Activated CD4-positive, alpha-beta T cell treated with anti-CD3 and anti-CD28 coated beads, Interleukin-2, amount 10 ng/mL, durations not matched to agents 7 days and 5 days (primary cell): ENCODE measurements at regions of chr19 and their contacts with region 1.

Region 1: GRCh38 chr19:58519355-58520256 is at the start of gene ZBTB45:
- DNase-seq: peak; percentile 91
- H3K4me3 Mint-ChIP-seq: peak within 1 kb of the TSS; percentile 90
- H3K27ac Mint-ChIP-seq: peak within 1 kb of the TSS; percentile 95
- H3K4me1 Mint-ChIP-seq: peaks cover 56% of the 10 kb centered on the region
- H3K27me3 Mint-ChIP-seq: no peaks in the 10 kb centered on the region
- total RNA-seq, gene ZBTB45: 17.9 to 19.9 TPM

Region 2: DNA sequence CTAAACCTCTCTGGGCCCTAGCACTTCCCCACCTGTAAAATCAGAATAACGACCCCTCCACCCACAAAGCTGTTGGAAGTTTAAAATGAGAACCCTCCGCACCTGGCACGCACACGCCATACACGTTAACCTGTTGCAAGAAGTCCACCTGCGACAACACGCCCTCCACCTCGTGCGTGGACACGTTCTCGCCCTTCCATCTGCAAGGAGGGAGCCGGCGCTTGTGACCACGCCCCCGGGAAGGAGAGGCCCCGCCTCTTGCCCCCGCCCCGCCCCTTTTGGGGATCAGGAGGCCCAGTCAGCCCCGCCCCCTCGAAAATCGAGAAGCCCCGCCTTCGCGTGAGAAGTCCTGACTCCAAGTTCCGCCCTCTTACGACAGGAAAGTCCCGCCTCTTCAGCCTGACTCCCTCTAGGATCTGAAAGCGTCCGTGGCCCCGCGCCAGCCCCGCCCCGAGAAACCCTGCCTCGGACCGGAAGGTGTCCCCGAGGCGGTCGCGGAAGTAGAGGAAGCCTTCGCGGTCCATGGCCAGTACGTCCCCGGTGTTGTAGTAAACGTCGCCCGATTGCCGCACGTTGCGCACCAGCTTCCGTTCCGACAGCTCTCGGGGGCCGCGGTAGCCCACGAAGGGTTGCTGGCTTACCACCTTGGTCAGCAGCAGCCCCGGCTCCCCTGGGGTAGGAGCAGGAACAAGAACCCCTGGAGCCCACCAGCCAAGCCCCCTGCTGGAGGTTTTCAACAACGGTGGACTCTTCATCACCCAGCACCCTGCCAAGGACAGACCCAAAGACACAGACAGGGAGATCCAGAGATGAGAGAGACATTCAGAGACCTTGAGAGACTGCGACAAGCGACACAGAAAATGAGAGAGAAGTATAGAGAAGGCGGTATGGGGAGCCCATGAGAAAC is 20.3 kb before region 1 on chr19:
- CTCF ChIA-PET with region 1: interaction called, 34 read pairs
- POLR2A ChIA-PET with region 1: no interaction called
- DNase-seq: peak; percentile 98
- H3K4me3 Mint-ChIP-seq: peak overlapping the region; percentile 86
- H3K27ac Mint-ChIP-seq: peak overlapping the region; percentile 91
- H3K4me1 Mint-ChIP-seq: peaks cover 24% of the 10 kb centered on the region
- H3K27me3 Mint-ChIP-seq: no peaks in the 10 kb centered on the region

Region 3: GRCh38 chr19:58531034-58531840 is 11.6 kb after region 1 on chr19:
- CTCF ChIA-PET with region 1: interaction called, 13 read pairs
- POLR2A ChIA-PET with region 1: no interaction called
- DNase-seq: no peak
- H3K4me3 Mint-ChIP-seq: no peak overlapping the region
- H3K27ac Mint-ChIP-seq: no peak overlapping the region
- H3K4me1 Mint-ChIP-seq: peaks cover 2% of the 10 kb centered on the region
- H3K27me3 Mint-ChIP-seq: peaks cover 11% of the 10 kb centered on the region

Region 4: GRCh38 chr19:58543826-58544590 is 24.4 kb after region 1 on chr19 and contains the start of gene TRIM28:
- CTCF ChIA-PET with region 1: interaction called, 11 read pairs
- POLR2A ChIA-PET with region 1: interaction called, 9 read pairs
- DNase-seq: peak; percentile 99
- H3K4me3 Mint-ChIP-seq: peak within 1 kb of the TSS; percentile 91
- H3K27ac Mint-ChIP-seq: peak within 1 kb of the TSS; percentile 96
- H3K4me1 Mint-ChIP-seq: peaks cover 43% of the 10 kb centered on the region
- H3K27me3 Mint-ChIP-seq: peaks cover 6% of the 10 kb centered on the region
- total RNA-seq, gene TRIM28: 457 to 560 TPM

Region 5: GRCh38 chr19:58548859-58549663 is 29.5 kb after region 1 on chr19:
- CTCF ChIA-PET with region 1: interaction called, 25 read pairs
- POLR2A ChIA-PET with region 1: interaction called, 9 read pairs
- DNase-seq: no peak
- H3K4me3 Mint-ChIP-seq: no peak overlapping the region
- H3K27ac Mint-ChIP-seq: no peak overlapping the region
- H3K4me1 Mint-ChIP-seq: peaks cover 45% of the 10 kb centered on the region
- H3K27me3 Mint-ChIP-seq: no peaks in the 10 kb centered on the region

Region 6: DNA sequence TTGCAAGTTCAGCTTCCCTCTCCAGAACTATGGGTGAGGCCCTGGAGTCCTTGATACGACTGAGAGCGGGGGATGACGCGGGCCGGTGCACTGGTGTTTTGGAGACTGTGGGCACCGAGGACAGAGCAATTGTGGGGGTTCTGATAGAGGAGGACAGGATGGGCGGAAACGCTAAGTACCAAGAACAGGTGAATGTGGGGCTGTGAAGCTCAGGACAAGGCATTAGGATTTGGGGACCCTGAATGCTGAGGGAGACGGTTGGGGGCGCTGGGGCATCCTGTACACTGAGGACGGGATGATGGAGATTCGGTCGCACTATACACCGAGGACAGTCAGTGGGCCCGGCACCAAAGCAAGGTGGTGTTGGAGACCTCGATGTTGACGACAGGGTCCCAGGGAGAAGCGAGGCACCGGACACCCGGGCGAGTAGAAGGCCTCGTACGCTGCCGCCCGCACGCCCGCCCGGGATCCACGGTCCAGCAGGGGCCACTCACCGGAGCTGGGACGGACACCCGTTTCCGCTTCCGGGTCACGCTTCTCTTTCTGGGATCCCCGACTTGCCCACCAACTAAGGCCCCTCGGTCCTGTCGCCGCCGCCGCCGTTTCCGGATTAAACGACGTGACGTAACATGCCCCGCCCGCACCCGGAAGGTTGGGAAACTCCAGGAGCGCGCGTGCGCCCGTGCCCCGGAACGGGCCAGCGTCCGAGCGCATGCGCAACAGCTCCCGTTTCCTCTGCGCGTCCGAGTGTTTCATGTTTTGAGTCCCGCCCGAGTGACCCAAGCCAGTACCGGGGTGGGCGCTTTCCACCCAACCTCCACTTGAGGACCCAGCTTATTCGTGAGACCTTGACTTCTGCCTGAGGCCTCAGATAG is 35.1 kb after region 1 on chr19 and contains the start of gene CHMP2A:
- CTCF ChIA-PET with region 1: interaction called, 25 read pairs
- POLR2A ChIA-PET with region 1: interaction called, 3 read pairs
- DNase-seq: peak; percentile 98
- H3K4me3 Mint-ChIP-seq: peak within 1 kb of the TSS; percentile 90
- H3K27ac Mint-ChIP-seq: peak within 1 kb of the TSS; percentile 94
- H3K4me1 Mint-ChIP-seq: peaks cover 53% of the 10 kb centered on the region
- H3K27me3 Mint-ChIP-seq: no peaks in the 10 kb centered on the region
- total RNA-seq, gene CHMP2A: 128 to 137 TPM

Region 7: GRCh38 chr19:58572818-58573657 is 53.4 kb after region 1 on chr19 and contains the start of gene MZF1:
- CTCF ChIA-PET with region 1: interaction called, 72 read pairs
- POLR2A ChIA-PET with region 1: interaction called, 5 read pairs
- DNase-seq: peak; percentile 100
- H3K4me3 Mint-ChIP-seq: peak within 1 kb of the TSS; percentile 95
- H3K27ac Mint-ChIP-seq: peak within 1 kb of the TSS; percentile 99
- H3K4me1 Mint-ChIP-seq: peaks cover 48% of the 10 kb centered on the region
- H3K27me3 Mint-ChIP-seq: no peaks in the 10 kb centered on the region
- total RNA-seq, gene MZF1: 28.6 to 33.1 TPM